Calu3 (cell line): ENCODE measurements at regions of chr12 and their contacts with region 1.

Region 1: GRCh38 chr12:16939871-16940306 is 333.9 kb upstream of the LMO3 start:
- DNase-seq: peak; percentile 76
- H3K4me3 Mint-ChIP-seq: no peak overlapping the region
- H3K27ac Mint-ChIP-seq: no peak overlapping the region
- H3K4me1 Mint-ChIP-seq: no peaks in the 10 kb centered on the region
- H3K27me3 Mint-ChIP-seq: no peaks in the 10 kb centered on the region
- CTCF ChIP-seq: peak; percentile 92

Region 2: GRCh38 chr12:17148706-17149105 is 208.8 kb after region 1 on chr12:
- CTCF ChIA-PET with region 1: no interaction called
- intact Hi-C with region 1: loop called (anchors 10 kb)
- DNase-seq: no peak
- H3K4me3 Mint-ChIP-seq: no peak overlapping the region
- H3K27ac Mint-ChIP-seq: no peak overlapping the region
- H3K4me1 Mint-ChIP-seq: no peaks in the 10 kb centered on the region
- H3K27me3 Mint-ChIP-seq: no peaks in the 10 kb centered on the region
- CTCF ChIP-seq: no peak

Region 3: DNA sequence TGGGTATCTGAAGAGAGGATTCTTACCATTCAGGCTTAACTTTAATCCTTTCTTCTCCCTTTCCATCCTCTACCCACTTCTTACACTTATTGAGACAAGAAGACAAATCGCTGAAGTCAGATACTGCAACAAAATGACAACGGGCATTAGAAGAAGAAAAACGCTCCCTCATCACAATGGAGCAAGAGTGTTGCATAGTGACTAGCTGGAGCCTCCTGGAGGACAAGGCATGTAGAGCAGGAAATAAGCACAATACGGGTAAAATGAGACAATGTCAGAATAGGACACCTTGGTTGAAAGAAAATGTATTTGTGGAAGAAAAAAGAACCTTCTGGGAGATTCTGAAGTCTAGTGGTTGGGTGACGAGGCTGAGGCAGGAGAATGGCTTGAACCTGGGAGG is 649.1 kb after region 1 on chr12:
- CTCF ChIA-PET with region 1: no interaction called
- intact Hi-C with region 1: loop called (anchors 5 kb)
- DNase-seq: peak; percentile 8
- H3K4me3 Mint-ChIP-seq: no peak overlapping the region
- H3K27ac Mint-ChIP-seq: no peak overlapping the region
- H3K4me1 Mint-ChIP-seq: no peaks in the 10 kb centered on the region
- H3K27me3 Mint-ChIP-seq: no peaks in the 10 kb centered on the region
- CTCF ChIP-seq: peak; percentile 51

Region 4: GRCh38 chr12:17928708-17929366 is 988.9 kb after region 1 on chr12:
- CTCF ChIA-PET with region 1: interaction called, 3 read pairs
- intact Hi-C with region 1: loop called (anchors 10 kb)
- DNase-seq: peak; percentile 22
- H3K4me3 Mint-ChIP-seq: no peak overlapping the region
- H3K27ac Mint-ChIP-seq: peak overlapping the region; percentile 72
- H3K4me1 Mint-ChIP-seq: peaks cover 11% of the 10 kb centered on the region
- H3K27me3 Mint-ChIP-seq: no peaks in the 10 kb centered on the region
- CTCF ChIP-seq: peak; percentile 38